Gastrocnemius medialis (tissue), 4 donors: ENCODE measurements at regions of chr1 and their contacts with region 1.

Region 1: GRCh38 chr1:155050560-155051341 is at the start of gene ADAM15:
- DNase-seq: peak; percentile 64 to 82
- ATAC-seq: peak; percentile 78 to 83
- H3K4me3 ChIP-seq: peak within 1 kb of the TSS; percentile 82 to 96 (median 90)
- H3K27ac ChIP-seq: peak within 1 kb of the TSS; percentile 90 to 99 (median 94)
- H3K4me1 ChIP-seq: peaks cover 25 to 29% of the 10 kb centered on the region in 2 donors
- H3K27me3 ChIP-seq: no peaks in the 10 kb centered on the region
- CTCF ChIP-seq: peak; percentile 91 to 98 (median 95)
- POLR2A ChIP-seq: no peak
- total RNA-seq, gene ADAM15: 30.3 to 42.8 (median 36.9) TPM

Region 2: DNA sequence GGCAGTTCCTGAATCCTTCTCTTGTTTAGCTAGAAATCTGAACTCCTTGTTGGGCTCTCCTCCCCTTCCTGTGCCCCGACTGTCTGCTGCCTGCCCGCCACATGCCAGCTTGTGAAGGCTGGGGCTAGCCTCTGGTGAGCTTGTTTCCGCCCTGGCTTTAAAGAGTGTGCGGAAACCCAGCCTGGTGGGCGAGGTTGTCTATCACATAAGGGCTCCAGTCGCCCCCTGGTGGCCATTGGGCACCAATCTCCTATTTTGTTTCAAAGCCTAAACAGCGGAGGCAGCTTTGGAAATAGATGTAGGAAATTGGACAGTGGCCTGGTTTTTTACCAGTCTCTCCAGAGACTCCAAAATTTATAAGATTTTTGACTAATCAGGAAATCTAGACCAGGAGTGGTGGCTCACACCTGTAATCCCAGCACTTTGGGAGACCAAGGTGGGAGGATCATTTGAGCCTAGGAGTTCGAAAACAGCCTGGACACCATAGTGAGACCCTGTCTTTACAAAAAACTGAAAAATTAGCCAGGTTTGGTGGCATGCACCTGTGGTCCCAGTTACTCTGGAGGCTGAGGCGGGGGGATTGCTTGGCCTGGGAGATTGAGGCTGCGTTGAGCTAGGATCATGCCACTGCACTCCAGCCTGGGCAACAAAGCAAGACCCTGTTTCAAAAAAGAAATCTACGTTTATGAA is 715.6 kb before region 1 on chr1:
- in situ Hi-C with region 1: no loop called
- intact Hi-C with region 1: no loop called
- DNase-seq: peak; percentile 41 to 66
- ATAC-seq: peak; percentile 51 to 75
- H3K4me3 ChIP-seq: no peak overlapping the region
- H3K27ac ChIP-seq: peak overlapping the region in 1 of 4 donors; percentile 4
- H3K4me1 ChIP-seq: peaks cover 0 to 6% of the 10 kb centered on the region in 2 donors
- H3K27me3 ChIP-seq: peaks cover 0 to 3% (median 0%) of the 10 kb centered on the region in 3 donors
- CTCF ChIP-seq: peak; percentile 49 to 83 (median 76)
- POLR2A ChIP-seq: no peak

Region 3: GRCh38 chr1:154974063-154974807 is 76.5 kb before region 1 on chr1 and contains the start of gene CKS1B:
- in situ Hi-C with region 1: loop called in 1 of 4 experiments (anchors 25 kb)
- intact Hi-C with region 1: loop called (anchors 5 kb)
- DNase-seq: peak; percentile 97 to 99
- ATAC-seq: peak; percentile 83
- H3K4me3 ChIP-seq: peak within 1 kb of the TSS; percentile 67 to 75 (median 74)
- H3K27ac ChIP-seq: peak within 1 kb of the TSS; percentile 93 to 96 (median 95)
- H3K4me1 ChIP-seq: peaks cover 49 to 54% of the 10 kb centered on the region in 2 donors
- H3K27me3 ChIP-seq: no peaks in the 10 kb centered on the region
- CTCF ChIP-seq: no peak
- POLR2A ChIP-seq: peak; percentile 72 to 73
- total RNA-seq, gene CKS1B: 3.6 to 15.7 (median 7.9) TPM